Esophagus muscularis mucosa (tissue), 4 donors: ENCODE measurements at regions of chr5 and their contacts with region 1.

Region 1: DNA sequence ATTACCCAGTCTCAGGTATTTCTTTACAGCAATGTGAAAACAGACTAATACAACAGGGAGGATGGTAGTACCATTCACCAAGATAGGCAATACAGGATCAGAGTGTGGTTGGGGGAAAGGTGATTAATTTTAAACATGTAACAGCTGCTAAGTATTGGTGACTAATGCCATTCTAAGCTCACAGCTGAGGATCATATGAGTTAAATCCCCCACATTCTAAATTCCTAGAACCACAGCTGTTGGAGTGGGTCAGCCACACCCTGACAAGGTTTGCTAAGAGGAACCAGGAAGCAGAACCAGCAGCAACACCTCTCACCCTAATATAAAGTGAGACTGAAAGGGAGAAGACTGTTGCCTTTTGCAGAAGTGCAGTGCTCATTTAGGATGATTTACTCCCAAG is 24.8 kb downstream of the HSPB3 start:
- DNase-seq: no peak
- H3K4me3 ChIP-seq: no peak overlapping the region
- H3K27ac ChIP-seq: no peak overlapping the region
- H3K4me1 ChIP-seq: no peaks in the 10 kb centered on the region
- H3K27me3 ChIP-seq: no peaks in the 10 kb centered on the region
- CTCF ChIP-seq: no peak
- EP300 ChIP-seq: no peak
- POLR2A ChIP-seq: no peak

Region 2: DNA sequence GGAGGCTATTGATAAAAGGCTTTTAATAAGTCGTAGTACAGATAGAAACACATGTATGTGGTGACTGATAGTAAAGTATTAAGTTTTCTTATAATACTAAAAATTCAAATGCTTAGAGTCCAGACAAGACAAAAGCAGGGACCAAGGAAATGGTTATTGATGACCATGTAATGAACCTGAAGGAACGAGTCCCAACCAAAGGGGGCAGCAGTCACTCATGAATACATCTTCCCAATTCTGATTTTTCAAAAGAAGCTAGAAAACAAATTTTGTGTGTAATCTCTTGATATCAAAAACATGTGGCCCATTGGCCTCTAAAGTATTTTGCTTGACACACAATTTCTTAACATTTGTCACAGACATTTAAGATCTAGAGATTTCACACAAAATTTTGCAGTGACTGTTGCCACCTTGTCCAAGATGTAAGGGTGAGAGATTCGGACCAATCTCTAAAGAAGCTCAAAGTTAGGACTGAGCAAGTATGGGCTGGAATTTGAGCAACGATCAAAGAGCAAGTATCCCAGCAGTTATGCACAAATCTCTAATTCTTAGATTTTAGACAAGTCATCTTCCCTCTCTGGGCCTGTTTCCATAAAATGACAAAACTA is 236.7 kb before region 1 on chr5:
- intact Hi-C with region 1: loop called (anchors 5 kb)
- DNase-seq: no peak
- H3K4me3 ChIP-seq: no peak overlapping the region
- H3K27ac ChIP-seq: no peak overlapping the region
- H3K4me1 ChIP-seq: peaks cover 0 to 7% (median 0%) of the 10 kb centered on the region in 4 donors
- H3K27me3 ChIP-seq: no peaks in the 10 kb centered on the region
- CTCF ChIP-seq: peak; percentile 51 to 65 (median 52)
- EP300 ChIP-seq: no peak
- POLR2A ChIP-seq: no peak

Region 3: DNA sequence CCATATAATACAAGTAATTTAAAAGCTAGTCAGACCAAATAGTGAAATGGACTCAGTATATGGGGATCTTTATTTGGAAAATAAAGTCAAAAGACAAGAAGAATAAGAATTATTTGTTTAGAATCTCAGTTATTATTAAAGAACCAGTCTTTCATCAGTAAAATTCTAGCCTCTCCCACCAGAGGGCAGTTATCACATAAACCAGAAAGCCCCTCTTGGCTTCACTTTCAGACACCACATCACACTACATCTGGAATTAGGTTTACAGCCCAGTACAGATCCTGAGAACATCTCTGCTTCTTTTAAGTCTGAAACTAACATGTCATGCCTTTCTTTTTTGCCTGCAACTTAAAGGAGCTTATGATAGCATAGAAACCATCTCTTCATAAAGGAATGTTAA is 37.0 kb before region 1 on chr5:
- intact Hi-C with region 1: loop called (anchors 5 kb)
- DNase-seq: peak; percentile 45
- H3K4me3 ChIP-seq: no peak overlapping the region
- H3K27ac ChIP-seq: no peak overlapping the region
- H3K4me1 ChIP-seq: peaks cover 0 to 14% (median 9%) of the 10 kb centered on the region in 4 donors
- H3K27me3 ChIP-seq: no peaks in the 10 kb centered on the region
- CTCF ChIP-seq: peak; percentile 45 to 46 (median 45)
- EP300 ChIP-seq: no peak
- POLR2A ChIP-seq: no peak